ENCODE measurements at regions of chr6 and their contacts with region 1.

Region 1: GRCh38 chr6:26342106-26343004 is 22.6 kb upstream of the BTN3A2 start:
- DNase-seq: no peak
- H3K4me3 Mint-ChIP-seq: peak overlapping the region; percentile 78
- H3K27ac Mint-ChIP-seq: peak overlapping the region; percentile 74
- H3K4me1 Mint-ChIP-seq: peaks cover 22% of the 10 kb centered on the region
- H3K27me3 Mint-ChIP-seq: peaks cover 8% of the 10 kb centered on the region

Region 2: GRCh38 chr6:24566020-24566767 is 1776.2 kb before region 1 on chr6:
- intact Hi-C with region 1: no loop called
- DNase-seq: no peak
- H3K4me3 Mint-ChIP-seq: no peak overlapping the region
- H3K27ac Mint-ChIP-seq: no peak overlapping the region
- H3K4me1 Mint-ChIP-seq: no peaks in the 10 kb centered on the region
- H3K27me3 Mint-ChIP-seq: peaks cover 1% of the 10 kb centered on the region

Region 3: GRCh38 chr6:26363882-26364701 is 21.7 kb after region 1 on chr6:
- intact Hi-C with region 1: loop called (anchors 1 kb)
- DNase-seq: no peak
- H3K4me3 Mint-ChIP-seq: no peak overlapping the region
- H3K27ac Mint-ChIP-seq: no peak overlapping the region
- H3K4me1 Mint-ChIP-seq: peaks cover 52% of the 10 kb centered on the region
- H3K27me3 Mint-ChIP-seq: no peaks in the 10 kb centered on the region

Region 4: DNA sequence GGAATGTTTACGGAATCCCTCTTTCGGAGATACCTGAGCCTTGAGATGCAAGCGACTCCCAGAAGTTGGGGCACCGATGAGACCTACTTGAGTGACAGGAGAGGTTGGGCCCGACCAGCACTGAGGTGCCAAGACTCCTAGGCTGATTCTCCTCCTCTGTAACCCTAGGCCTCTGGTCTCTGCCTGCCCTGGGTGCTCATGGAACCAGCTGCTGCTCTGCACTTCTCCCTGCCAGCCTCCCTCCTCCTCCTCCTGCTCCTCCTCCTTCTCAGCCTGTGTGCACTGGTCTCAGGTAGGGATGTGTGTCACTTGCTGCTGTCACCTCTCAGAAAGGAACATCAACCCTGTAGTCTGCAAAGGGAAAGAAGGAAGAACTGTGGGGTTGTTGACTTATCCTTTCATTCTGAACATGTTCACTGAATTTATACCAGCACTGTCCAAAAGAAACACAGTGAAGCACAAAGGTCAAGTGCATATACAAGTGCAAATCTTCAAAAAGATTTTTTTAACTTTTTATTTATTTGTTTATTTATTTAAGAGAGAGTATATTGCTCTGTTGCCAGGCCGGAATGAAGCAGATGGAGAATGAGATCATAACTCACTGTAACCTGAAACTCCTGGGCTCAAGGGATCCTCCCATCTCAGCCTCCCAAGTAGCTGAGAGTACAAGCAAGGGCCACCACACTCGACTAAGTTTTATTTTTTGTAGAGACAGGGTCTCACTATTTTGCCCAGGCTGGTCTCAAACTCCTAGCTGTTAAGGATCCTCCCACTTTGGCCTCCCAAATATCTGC is 41.5 kb after region 1 on chr6:
- intact Hi-C with region 1: loop called (anchors 1 kb)
- DNase-seq: no peak
- H3K4me3 Mint-ChIP-seq: peak overlapping the region; percentile 99
- H3K27ac Mint-ChIP-seq: peak overlapping the region; percentile 98
- H3K4me1 Mint-ChIP-seq: peaks cover 27% of the 10 kb centered on the region
- H3K27me3 Mint-ChIP-seq: no peaks in the 10 kb centered on the region

Region 5: GRCh38 chr6:26401987-26402658 is 59.8 kb after region 1 on chr6 and contains the start of gene BTN3A1:
- intact Hi-C with region 1: loop called (anchors 1 kb)
- DNase-seq: peak; percentile 51
- H3K4me3 Mint-ChIP-seq: peak within 1 kb of the TSS; percentile 93
- H3K27ac Mint-ChIP-seq: peak within 1 kb of the TSS; percentile 98
- H3K4me1 Mint-ChIP-seq: peaks cover 39% of the 10 kb centered on the region
- H3K27me3 Mint-ChIP-seq: no peaks in the 10 kb centered on the region
- total RNA-seq, gene BTN3A1: 34.8 and 38.6 TPM in 2 replicates

Region 6: GRCh38 chr6:26421259-26422144 is 79.1 kb after region 1 on chr6:
- intact Hi-C with region 1: loop called (anchors 5 kb)
- DNase-seq: peak; percentile 30
- H3K4me3 Mint-ChIP-seq: no peak overlapping the region
- H3K27ac Mint-ChIP-seq: no peak overlapping the region
- H3K4me1 Mint-ChIP-seq: peaks cover 13% of the 10 kb centered on the region
- H3K27me3 Mint-ChIP-seq: no peaks in the 10 kb centered on the region

Region 7: GRCh38 chr6:26568601-26569432 is 226.5 kb after region 1 on chr6:
- intact Hi-C with region 1: loop called (anchors 5 kb)
- DNase-seq: peak; percentile 95
- H3K4me3 Mint-ChIP-seq: peak overlapping the region; percentile 93
- H3K27ac Mint-ChIP-seq: peak overlapping the region; percentile 78
- H3K4me1 Mint-ChIP-seq: peaks cover 32% of the 10 kb centered on the region
- H3K27me3 Mint-ChIP-seq: no peaks in the 10 kb centered on the region